ENCODE measurements at regions of chr4 and their contacts with region 1.

Region 1: DNA sequence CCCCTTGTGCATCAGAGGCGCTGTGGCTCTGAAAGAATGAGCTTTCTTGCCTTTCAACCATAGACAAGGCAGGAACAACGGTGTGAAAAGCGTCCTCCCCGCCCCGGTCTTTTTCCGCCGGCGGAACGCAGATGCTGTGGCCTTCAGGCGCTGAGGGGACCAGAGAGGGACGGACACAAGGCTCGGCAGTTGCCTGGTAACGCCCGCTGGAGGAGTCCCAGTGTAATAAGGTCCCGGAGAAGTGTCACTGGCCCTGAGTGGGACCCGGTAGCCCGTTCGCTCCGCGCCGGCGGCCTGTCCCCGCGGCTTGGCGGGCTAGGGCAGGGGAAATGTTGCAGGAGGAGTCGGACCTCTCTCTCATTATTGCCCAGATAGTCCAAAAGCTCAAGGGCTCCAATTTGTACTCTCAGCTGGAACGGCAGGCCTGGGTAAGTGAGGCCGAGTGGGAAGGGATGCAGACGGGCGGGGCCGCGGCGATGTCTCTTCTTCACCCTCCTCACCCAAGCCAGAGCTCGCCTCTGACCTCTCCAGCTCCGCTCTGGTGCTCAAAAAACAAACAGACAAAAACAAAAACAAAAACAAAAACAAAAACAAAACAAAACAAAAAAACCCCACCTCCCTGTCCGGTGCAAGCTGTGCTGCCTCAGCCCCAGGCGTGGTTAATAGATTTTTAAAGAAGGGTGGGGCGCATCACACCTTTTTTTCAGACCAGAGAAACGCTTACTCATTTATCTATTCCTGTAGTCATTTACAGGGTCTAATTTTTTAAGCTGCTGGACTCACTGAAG is at the start of gene TBC1D19:
- DNase-seq: peak; percentile 94
- H3K4me3 Mint-ChIP-seq: peak within 1 kb of the TSS; percentile 97
- H3K27ac Mint-ChIP-seq: peak within 1 kb of the TSS; percentile 93
- H3K4me1 Mint-ChIP-seq: peaks cover 20% of the 10 kb centered on the region
- H3K27me3 Mint-ChIP-seq: no peaks in the 10 kb centered on the region
- total RNA-seq, gene TBC1D19: 4.3 to 5.0 TPM

Region 2: GRCh38 chr4:25913851-25914669 is 670.0 kb before region 1 on chr4 and contains the start of gene SMIM20:
- CTCF ChIA-PET with region 1: no interaction called
- POLR2A ChIA-PET with region 1: no interaction called
- intact Hi-C with region 1: loop called (anchors 5 kb)
- DNase-seq: peak; percentile 93
- H3K4me3 Mint-ChIP-seq: peak within 1 kb of the TSS; percentile 87
- H3K27ac Mint-ChIP-seq: peak within 1 kb of the TSS; percentile 94
- H3K4me1 Mint-ChIP-seq: peaks cover 17% of the 10 kb centered on the region
- H3K27me3 Mint-ChIP-seq: no peaks in the 10 kb centered on the region
- total RNA-seq, gene SMIM20: 26.0 to 28.0 TPM

Region 3: GRCh38 chr4:26568446-26568994 is 15.5 kb before region 1 on chr4:
- CTCF ChIA-PET with region 1: interaction called, 4 read pairs
- POLR2A ChIA-PET with region 1: interaction called, 10 read pairs
- intact Hi-C with region 1: no loop called
- DNase-seq: no peak
- H3K4me3 Mint-ChIP-seq: no peak overlapping the region
- H3K27ac Mint-ChIP-seq: no peak overlapping the region
- H3K4me1 Mint-ChIP-seq: peaks cover 16% of the 10 kb centered on the region
- H3K27me3 Mint-ChIP-seq: peaks cover 16% of the 10 kb centered on the region

Region 4: DNA sequence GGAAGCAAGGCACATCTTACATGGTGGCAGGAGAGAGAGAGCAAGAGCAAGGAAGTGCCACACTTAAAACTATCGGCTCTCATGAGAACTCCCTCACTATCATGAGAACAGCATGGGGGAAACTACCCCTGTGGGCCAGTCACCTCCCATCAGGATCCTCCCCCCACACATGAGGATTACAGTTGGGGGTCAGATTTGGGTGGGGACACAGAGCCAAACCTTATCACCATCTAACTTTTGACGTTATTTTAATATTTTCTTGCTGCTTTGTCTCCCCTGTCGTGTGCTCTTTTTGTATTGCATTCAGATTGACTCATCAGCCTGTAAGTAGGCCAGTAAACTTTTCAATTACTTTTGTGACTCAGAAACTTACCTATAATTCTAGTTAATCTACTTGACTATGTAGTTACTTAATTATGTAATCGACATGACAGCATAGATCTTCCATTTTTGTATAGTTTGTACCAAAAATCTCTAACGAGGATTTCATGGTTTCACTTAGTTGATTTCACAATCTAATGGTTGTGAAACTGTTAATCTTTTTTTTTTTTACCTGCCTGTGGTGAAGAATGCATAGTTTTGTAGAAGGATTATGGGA is 294.8 kb after region 1 on chr4:
- CTCF ChIA-PET with region 1: no interaction called
- POLR2A ChIA-PET with region 1: no interaction called
- intact Hi-C with region 1: loop called (anchors 2 kb)
- DNase-seq: peak; percentile 47
- H3K4me3 Mint-ChIP-seq: peak overlapping the region; percentile 60
- H3K27ac Mint-ChIP-seq: peak overlapping the region; percentile 99
- H3K4me1 Mint-ChIP-seq: peaks cover 73% of the 10 kb centered on the region
- H3K27me3 Mint-ChIP-seq: no peaks in the 10 kb centered on the region

Measured in activated CD4-positive, alpha-beta memory T cell treated with anti-CD3 and anti-CD28 coated beads for 36 hours (primary cell).